Transverse colon (tissue), 4 donors: ENCODE measurements at regions of chr19 and their contacts with region 1.

Region 1: DNA sequence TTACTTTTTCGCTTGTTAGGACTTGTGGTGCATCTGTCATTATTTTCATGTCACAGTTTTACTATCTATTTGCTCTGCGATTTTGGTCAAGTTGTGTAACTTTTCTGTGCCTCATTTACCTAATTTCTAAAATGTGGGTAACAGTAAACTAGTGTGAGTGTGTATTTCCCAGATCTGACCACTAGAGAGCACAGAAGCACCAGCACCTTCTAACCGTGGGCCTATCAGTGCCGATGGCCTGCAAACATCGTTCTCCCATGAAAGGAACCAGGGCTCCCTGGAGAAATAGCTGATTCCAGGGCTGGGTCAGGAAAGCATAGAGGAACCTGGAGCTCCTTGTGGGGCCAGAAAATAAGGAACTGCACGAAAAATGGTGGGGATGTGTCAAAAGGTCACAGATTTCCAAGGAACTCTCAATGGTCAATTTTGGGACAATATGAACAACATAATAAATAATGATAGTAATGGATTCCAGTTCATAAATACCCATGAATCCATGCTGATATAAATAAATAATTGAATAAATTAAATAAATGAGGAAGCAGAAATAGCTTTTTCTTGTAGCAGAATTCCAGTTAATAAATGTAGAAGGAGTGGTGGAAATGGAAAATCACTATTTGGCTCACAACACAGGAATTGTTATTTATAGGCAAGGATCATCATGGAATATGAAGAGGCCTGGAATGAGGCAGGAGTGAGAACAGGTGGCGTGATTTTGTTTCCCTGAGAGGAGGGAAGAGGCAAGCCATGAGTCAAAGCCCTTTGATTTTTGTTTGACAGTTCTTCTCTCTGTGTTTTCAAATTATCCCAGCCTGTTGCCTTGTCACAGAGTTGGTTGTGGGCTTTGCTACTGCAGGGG is 31.1 kb downstream of the CEACAM8 start:
- DNase-seq: peak; percentile 35
- H3K4me3 ChIP-seq: no peak overlapping the region
- H3K27ac ChIP-seq: no peak overlapping the region
- H3K4me1 ChIP-seq: peaks cover 0 to 7% (median 0%) of the 10 kb centered on the region in 4 donors
- H3K27me3 ChIP-seq: peaks cover 14% of the 10 kb centered on the region
- CTCF ChIP-seq: peak; percentile 58 to 77 (median 60)
- EP300 ChIP-seq: no peak
- POLR2A ChIP-seq: no peak

Region 2: GRCh38 chr19:42219812-42220750 is 343.5 kb before region 1 on chr19 and contains the start of gene ZNF526:
- in situ Hi-C with region 1: no loop called
- intact Hi-C with region 1: no loop called
- DNase-seq: peak; percentile 98
- H3K4me3 ChIP-seq: peak within 1 kb of the TSS; percentile 78 to 93 (median 86)
- H3K27ac ChIP-seq: peak within 1 kb of the TSS; percentile 93 to 95 (median 94)
- H3K4me1 ChIP-seq: peaks cover 13 to 55% (median 41%) of the 10 kb centered on the region in 4 donors
- H3K27me3 ChIP-seq: no peaks in the 10 kb centered on the region
- CTCF ChIP-seq: no peak
- EP300 ChIP-seq: no peak
- POLR2A ChIP-seq: peak; percentile 71
- total RNA-seq, gene ZNF526: 6.4 to 19.5 (median 6.8) TPM

Region 3: DNA sequence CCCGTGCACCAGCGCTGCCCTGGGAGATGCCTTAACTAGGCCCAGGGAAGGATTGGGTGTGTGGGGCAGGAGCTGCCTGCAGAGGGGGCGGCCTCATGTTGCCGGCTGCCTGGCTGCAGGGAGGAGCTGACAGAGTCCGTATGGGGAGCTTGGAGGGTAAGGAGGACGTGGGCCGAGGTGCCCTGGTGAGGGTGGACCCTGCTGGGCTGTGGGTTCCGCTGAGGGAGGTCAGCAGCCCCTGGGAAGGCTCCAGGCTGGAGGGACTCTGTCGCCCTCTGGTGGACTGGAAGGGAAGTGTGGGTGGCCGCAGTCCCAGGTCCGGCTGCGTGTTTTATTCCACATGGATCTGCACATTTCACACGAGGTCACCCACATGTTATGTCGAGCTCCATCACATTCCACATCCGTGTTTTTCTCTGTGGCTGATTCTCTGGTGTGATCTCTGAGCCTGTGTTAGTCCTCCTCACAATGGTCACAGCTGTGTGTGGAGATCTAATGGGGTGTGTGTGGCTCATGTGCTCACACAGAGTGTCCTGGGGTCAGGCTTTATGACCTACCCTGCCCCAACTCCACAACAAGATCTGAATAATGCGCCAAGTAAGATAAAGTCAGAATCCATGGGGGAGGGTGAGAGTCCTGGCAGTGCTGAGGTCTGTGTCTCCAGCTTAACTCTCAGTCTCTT is 33.0 kb after region 1 on chr19:
- in situ Hi-C with region 1: loop called in 2 of 4 experiments (anchors 5 to 10 kb)
- intact Hi-C with region 1: no loop called
- DNase-seq: peak; percentile 39
- H3K4me3 ChIP-seq: no peak overlapping the region
- H3K27ac ChIP-seq: no peak overlapping the region
- H3K4me1 ChIP-seq: peaks cover 0 to 5% (median 0%) of the 10 kb centered on the region in 4 donors
- H3K27me3 ChIP-seq: no peaks in the 10 kb centered on the region
- CTCF ChIP-seq: peak; percentile 88 to 96 (median 95)
- EP300 ChIP-seq: no peak
- POLR2A ChIP-seq: no peak